ENCODE measurements at regions of chr1 and their contacts with region 1.

Region 1: DNA sequence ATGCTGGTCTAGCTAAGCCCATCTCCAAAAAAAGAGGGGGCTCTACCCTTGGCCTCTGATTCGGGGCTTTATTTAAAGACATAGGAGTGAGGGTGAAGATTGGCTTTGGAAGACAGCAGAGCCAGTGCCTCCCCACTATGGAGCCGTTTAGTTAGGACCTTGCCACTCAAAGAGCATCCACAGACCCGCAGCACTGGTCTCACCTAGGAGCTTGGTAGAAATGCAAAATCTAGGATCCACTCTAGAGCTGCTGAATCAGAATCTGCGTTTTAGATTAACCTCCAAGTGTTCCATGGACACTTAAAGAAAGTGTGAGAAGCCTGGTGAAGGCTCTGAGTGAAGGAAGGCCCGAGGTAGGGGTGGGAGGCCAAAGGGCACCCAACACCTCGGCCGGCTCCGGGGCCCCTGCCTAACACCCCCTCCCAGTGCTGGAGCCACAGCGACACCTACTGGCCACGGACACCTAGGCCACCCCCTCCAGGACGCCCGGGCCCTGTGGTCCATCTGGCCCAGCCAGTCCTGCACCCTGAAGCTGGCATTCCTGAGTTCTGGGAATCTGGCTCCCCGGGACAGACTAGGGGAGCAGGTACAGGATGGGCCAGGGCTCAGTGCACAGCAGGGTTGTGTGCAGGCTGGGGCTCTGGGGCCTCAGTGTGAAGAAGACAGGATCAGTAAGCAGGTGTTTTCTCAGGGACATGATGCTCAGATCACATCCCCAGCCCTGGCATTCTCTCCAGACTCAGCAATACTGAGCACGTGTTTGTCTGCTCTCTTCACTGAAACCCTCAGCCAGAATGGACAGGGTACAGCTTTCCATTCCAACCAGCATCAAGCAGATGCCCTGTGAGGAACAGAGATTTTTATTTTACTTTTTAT is 79.2 kb downstream of the TMEM53 start:
- DNase-seq: peak; percentile 84
- H3K4me3 Mint-ChIP-seq: no peak overlapping the region
- H3K27ac Mint-ChIP-seq: no peak overlapping the region
- H3K4me1 Mint-ChIP-seq: no peaks in the 10 kb centered on the region
- H3K27me3 Mint-ChIP-seq: peaks cover 16% of the 10 kb centered on the region

Region 2: GRCh38 chr1:44377925-44378784 is 217.0 kb before region 1 on chr1:
- CTCF ChIA-PET with region 1: interaction called, 26 read pairs
- DNase-seq: peak; percentile 63
- H3K4me3 Mint-ChIP-seq: no peak overlapping the region
- H3K27ac Mint-ChIP-seq: no peak overlapping the region
- H3K4me1 Mint-ChIP-seq: no peaks in the 10 kb centered on the region
- H3K27me3 Mint-ChIP-seq: peaks cover 9% of the 10 kb centered on the region

Region 3: DNA sequence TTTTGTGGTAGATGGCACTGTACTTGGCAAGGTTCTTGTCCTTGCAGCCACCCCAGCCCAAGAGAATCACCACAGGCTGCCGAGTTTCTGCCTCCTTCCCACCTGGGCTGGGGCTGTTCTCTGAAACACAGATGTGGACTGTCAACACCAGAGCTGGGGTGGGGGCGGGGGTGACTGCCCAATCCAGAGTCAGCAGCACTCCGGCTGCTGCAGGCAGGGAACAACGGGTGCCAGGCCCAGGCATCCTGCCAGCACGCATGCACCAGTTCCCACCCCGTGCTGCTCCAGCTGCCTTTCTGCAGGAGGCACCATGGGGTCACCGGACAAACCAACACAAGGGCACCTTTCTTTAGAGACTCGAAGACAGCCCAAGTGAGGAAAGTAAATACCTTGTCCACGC is 65.1 kb after region 1 on chr1:
- CTCF ChIA-PET with region 1: no interaction called
- DNase-seq: no peak
- H3K4me3 Mint-ChIP-seq: no peak overlapping the region
- H3K27ac Mint-ChIP-seq: no peak overlapping the region
- H3K4me1 Mint-ChIP-seq: peaks cover 8% of the 10 kb centered on the region
- H3K27me3 Mint-ChIP-seq: no peaks in the 10 kb centered on the region

Measured in activated naive CD4-positive, alpha-beta T cell treated with anti-CD3 and anti-CD28 coated beads, Interleukin-2, amount 10 ng/mL, durations not matched to agents 7 days and 5 days (primary cell).